ENCODE measurements at regions of chr13 and their contacts with region 1.

Region 1: GRCh38 chr13:21638319-21639282 is 32.3 kb upstream of the FGF9 start:
- DNase-seq: peak in 1 of 10 donors; percentile 20
- H3K4me3 ChIP-seq: no peak overlapping the region
- H3K27ac ChIP-seq: no peak overlapping the region
- H3K27me3 ChIP-seq: peaks cover 0 to 8% (median 0%) of the 10 kb centered on the region in 45 donors
- CTCF ChIP-seq: peak; percentile 70 to 98 (median 85)

Region 2: GRCh38 chr13:22278336-22278929 is 639.8 kb after region 1 on chr13:
- intact Hi-C with region 1: loop called in 1 of 2 experiments (anchors 10 kb)
- DNase-seq: peak in 7 of 10 donors; percentile 13 to 63 (median 37)
- H3K4me3 ChIP-seq: no peak overlapping the region
- H3K27ac ChIP-seq: no peak overlapping the region
- H3K27me3 ChIP-seq: peaks cover 0 to 5% (median 0%) of the 10 kb centered on the region in 45 donors
- CTCF ChIP-seq: peak in 53 of 56 donors; percentile 28 to 66 (median 47)

Region 3: DNA sequence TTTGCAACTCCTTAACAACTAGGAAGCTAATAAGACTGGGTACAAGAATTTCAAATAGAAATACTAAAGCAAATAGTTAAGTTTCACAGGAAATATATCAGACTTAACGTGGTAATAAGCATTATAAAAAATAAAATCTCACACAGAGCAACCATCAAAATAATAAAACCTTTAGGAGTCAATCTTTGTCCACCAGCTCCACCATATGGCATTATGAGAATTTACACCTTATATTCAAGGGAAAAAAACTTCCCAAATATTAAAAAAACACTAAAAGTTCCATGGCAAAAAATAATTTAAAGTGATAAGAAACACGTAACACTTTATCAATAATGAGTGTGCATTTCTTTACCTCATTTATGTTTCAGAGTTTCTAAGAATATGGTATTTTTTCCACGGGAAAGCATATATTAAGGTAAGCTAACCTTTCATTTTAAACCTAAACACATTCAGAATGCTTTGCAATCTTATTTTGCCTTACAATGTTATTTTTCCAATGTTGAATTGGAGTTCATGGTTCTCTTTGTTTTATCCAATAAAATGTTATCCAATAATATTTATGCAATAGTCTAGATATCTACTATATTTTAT is 1119.0 kb after region 1 on chr13:
- intact Hi-C with region 1: loop called (anchors 10 kb)
- DNase-seq: no peak
- H3K4me3 ChIP-seq: no peak overlapping the region
- H3K27ac ChIP-seq: no peak overlapping the region
- H3K27me3 ChIP-seq: peaks cover 0 to 5% (median 0%) of the 10 kb centered on the region in 45 donors
- CTCF ChIP-seq: peak in 54 of 56 donors; percentile 26 to 71 (median 50)

Region 4: DNA sequence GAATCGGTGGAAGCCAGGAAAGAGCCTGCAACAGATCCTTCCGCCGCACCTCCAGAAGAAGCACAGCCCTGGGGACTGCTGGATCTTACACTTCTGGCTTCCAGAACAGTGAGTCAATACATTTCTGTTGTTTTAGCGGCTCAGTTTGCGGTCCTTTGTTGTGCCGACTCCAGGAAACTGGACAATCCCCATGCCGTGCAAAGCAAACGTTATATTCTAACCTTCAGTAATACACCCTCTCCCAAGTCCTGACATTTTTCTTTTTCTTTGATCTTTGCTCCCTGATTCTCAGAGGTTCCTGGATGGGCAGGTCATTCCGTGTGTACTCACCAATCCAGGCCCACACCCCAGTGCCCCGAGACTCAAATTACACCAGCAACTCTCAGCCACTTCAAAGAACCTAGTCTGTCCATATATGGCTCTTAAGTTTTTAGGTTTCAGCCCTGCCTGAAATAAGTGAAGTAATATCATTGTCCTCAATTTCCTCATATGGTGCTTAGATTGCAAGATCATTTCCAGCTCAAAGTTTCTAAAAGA is 1155.1 kb after region 1 on chr13:
- intact Hi-C with region 1: loop called in 1 of 2 experiments (anchors 10 kb)
- DNase-seq: no peak
- H3K4me3 ChIP-seq: no peak overlapping the region
- H3K27ac ChIP-seq: no peak overlapping the region
- H3K27me3 ChIP-seq: peaks cover 0 to 9% (median 0%) of the 10 kb centered on the region in 45 donors
- CTCF ChIP-seq: no peak